ENCODE measurements at regions of chr15 and their contacts with region 1.

Region 1: DNA sequence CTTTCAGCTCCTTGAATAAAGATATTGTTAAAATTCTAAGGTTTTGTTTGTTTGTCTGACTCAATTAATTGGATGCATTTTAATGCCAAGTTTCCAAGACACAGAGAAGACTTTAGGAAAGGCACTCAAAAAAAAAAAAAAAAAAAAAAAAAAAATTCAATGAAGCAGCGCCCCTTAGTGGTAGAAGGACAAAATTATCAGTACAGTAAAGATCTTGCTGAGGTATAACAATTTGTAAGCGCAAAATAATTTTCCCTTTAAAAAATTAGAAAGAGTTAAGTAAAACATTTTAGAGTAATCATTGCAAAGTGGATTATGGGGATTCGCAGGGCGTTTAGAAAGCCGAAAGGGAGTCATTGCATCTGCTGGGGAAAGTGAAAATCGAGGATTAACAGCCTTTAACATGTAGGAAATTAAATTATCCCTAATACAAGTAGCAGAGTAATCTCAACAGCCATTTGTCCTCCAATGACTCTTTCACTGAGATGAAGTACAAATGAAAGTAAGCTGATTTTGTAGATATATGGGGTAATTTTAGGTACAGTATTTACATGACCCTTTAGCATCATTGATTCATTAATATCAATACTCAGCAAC is 5.8 kb upstream of the DIS3L start:
- DNase-seq: no peak
- H3K4me3 ChIP-seq: no peak overlapping the region
- H3K27ac ChIP-seq: no peak overlapping the region
- H3K4me1 ChIP-seq: peaks cover 6 to 9% of the 10 kb centered on the region in 2 donors
- H3K27me3 ChIP-seq: no peaks in the 10 kb centered on the region
- CTCF ChIP-seq: peak in 5 of 6 experiments; percentile 12 to 84 (median 56)
- POLR2A ChIP-seq: no peak

Region 2: GRCh38 chr15:65980824-65981456 is 306.6 kb before region 1 on chr15:
- intact Hi-C with region 1: loop called (anchors 10 kb)
- DNase-seq: peak; percentile 66 to 68
- H3K4me3 ChIP-seq: no peak overlapping the region
- H3K27ac ChIP-seq: no peak overlapping the region
- H3K4me1 ChIP-seq: peaks cover 6 to 8% of the 10 kb centered on the region in 2 donors
- H3K27me3 ChIP-seq: no peaks in the 10 kb centered on the region
- CTCF ChIP-seq: peak in 4 of 6 experiments; percentile 61 to 68 (median 64)
- POLR2A ChIP-seq: no peak

Measured in thyroid gland (tissue), 4 donors.